ENCODE measurements at regions of chr5 and their contacts with region 1.

Region 1: DNA sequence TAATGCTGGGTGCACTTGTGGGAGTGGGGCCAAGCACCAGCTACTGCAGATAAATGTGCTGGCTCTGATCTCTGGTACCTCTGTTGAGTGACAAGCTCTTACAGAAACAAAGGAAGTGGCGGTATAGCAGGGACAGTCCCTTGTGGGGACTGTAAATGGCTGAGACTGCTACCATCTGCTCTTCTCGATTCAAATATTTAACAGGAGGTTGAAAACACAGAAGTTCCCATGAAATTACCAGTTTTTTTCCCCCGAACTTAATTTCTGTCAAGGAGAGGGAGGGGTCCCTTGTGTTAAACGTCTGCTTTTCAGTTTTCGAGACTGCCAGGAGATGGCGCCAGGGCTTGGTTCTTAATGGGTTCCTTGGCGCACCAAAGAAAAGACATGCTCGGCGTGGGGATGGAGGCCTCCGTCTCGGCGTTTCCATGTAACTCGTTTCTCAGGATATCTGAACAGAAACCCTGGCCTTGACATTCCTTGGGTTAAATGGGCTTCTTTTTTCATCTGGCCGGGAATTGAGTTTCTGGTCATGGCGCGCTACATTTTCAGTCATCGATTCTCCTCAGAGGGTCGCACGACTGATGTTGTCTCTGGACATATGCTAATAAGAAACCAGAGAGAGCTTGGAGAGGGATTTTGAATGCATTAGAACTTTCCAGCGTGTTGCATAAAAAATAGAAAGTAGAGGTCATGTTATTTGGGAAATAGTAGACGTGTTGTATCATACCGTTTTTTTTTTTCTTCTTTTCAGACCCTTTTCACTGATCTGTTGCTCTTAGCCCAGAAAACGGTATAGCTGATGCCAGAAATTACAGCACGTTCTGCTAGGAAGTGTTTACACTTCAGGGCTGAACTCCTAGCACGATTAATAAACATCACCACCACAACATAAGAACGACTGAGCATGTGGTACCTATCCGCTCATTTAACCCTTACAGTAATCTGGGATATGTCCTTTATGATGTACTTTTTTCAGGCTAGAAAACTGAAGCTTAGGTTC is 64.0 kb downstream of the CARTPT start:
- DNase-seq: peak; percentile 68
- H3K4me3 ChIP-seq: peak overlapping the region in 1 of 2 experiments; percentile 40; a peak in 1 of 4 replicates
- H3K27ac ChIP-seq: 0 out of 4 replicates have a peak overlapping the region, but pooled peaks of 1 of the 2 experiments have one; percentile 6
- H3K4me1 ChIP-seq: peaks cover 4 to 13% of the 10 kb centered on the region in 2 experiments; a peak in 2 of 4 replicates
- H3K27me3 ChIP-seq: no peaks in the 10 kb centered on the region
- CTCF ChIP-seq: peak; percentile 83
- EP300 ChIP-seq: no peak
- RAD21 ChIP-seq: peak; percentile 85

Region 2: DNA sequence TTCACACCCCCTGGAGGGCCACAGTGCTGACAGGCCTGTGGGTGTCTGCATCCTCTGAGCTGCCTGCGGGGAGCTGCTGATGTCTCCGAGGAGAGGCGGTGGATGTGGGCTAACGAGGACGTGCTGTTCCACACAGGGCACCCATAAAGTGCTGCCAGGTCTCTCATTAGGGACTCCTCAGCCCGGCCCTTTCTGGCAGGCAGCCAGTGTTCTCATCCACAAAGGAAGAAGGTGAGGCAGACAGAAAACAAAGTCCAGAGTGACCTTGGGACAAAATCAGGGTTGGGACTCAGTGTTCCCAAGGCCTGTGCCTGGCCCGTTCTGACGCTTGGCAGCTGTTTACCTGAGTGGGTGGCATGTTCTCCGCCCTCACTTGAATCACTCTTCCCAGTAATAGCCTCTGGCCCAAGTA is 34.7 kb before region 1 on chr5:
- CTCF ChIA-PET with region 1: no interaction called
- POLR2A ChIA-PET with region 1: no interaction called
- DNase-seq: peak; percentile 28
- H3K4me3 ChIP-seq: no peak overlapping the region
- H3K27ac ChIP-seq: no peak overlapping the region; a peak in 1 of 4 replicates
- H3K4me1 ChIP-seq: peaks cover 0 to 9% of the 10 kb centered on the region in 2 experiments; a peak in 1 of 4 replicates
- H3K27me3 ChIP-seq: no peaks in the 10 kb centered on the region
- CTCF ChIP-seq: no peak
- EP300 ChIP-seq: no peak
- RAD21 ChIP-seq: no peak

Region 3: GRCh38 chr5:71767661-71768060 is 15.4 kb before region 1 on chr5:
- CTCF ChIA-PET with region 1: interaction called, 15 read pairs
- POLR2A ChIA-PET with region 1: no interaction called
- DNase-seq: no peak
- H3K4me3 ChIP-seq: no peak overlapping the region
- H3K27ac ChIP-seq: peak overlapping the region in 1 of 2 experiments; percentile 23; a peak in 1 of 4 replicates
- H3K4me1 ChIP-seq: peaks cover 7 to 10% of the 10 kb centered on the region in 2 experiments; a peak in 3 of 4 replicates
- H3K27me3 ChIP-seq: no peaks in the 10 kb centered on the region
- CTCF ChIP-seq: no peak
- EP300 ChIP-seq: no peak
- RAD21 ChIP-seq: no peak

Region 4: GRCh38 chr5:72244862-72245371 is 461.8 kb after region 1 on chr5:
- CTCF ChIA-PET with region 1: interaction called, 32 read pairs
- POLR2A ChIA-PET with region 1: no interaction called
- DNase-seq: peak; percentile 43
- H3K4me3 ChIP-seq: no peak overlapping the region
- H3K27ac ChIP-seq: peak overlapping the region; percentile 91 to 99
- H3K4me1 ChIP-seq: peaks cover 16 to 50% of the 10 kb centered on the region in 2 experiments
- H3K27me3 ChIP-seq: no peaks in the 10 kb centered on the region
- CTCF ChIP-seq: peak; percentile 62
- EP300 ChIP-seq: no peak
- RAD21 ChIP-seq: peak; percentile 81

Region 5: DNA sequence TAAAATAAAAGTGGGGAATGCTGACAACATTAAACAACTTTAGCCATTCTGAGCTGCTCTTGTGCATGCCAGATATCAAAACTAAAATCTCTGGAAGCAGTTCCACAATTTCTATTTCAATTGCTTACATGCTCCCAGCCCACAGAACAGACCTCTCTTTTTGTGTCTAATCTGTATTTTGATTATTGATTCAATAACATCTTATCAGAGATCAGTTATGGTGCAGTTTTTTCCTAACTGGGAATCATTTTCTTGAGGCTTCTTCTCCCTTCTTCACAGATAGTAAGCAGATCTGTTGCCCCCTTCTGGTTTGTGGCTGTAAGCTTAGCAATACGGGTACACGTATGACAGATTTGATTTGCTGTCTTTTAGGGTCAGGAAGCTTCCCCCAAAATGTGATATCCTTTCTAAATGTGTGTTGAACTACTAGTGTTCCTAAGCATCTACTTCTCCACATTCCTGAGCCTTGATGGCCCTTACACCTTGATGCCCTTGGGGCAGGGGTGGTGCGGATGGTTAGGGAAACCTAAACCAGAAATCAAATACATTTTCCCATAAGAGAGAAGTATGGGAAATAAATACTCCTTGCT is 497.6 kb after region 1 on chr5:
- CTCF ChIA-PET with region 1: interaction called, 23 read pairs
- POLR2A ChIA-PET with region 1: no interaction called
- DNase-seq: peak; percentile 37
- H3K4me3 ChIP-seq: no peak overlapping the region; a peak in 1 of 4 replicates
- H3K27ac ChIP-seq: peak overlapping the region; percentile 88 to 90
- H3K4me1 ChIP-seq: peaks cover 33% of the 10 kb centered on the region in 2 experiments
- H3K27me3 ChIP-seq: no peaks in the 10 kb centered on the region
- CTCF ChIP-seq: peak; percentile 75
- EP300 ChIP-seq: peak in 1 of 2 experiments; percentile 81; a peak in 2 of 4 replicates
- RAD21 ChIP-seq: peak; percentile 54